ENCODE measurements at regions of chr20 and their contacts with region 1.

Region 1: GRCh38 chr20:50189681-50190582 is 698 bp upstream of the CEBPB start:
- DNase-seq: peak; percentile 95
- ATAC-seq: peak; percentile 74

Region 2: DNA sequence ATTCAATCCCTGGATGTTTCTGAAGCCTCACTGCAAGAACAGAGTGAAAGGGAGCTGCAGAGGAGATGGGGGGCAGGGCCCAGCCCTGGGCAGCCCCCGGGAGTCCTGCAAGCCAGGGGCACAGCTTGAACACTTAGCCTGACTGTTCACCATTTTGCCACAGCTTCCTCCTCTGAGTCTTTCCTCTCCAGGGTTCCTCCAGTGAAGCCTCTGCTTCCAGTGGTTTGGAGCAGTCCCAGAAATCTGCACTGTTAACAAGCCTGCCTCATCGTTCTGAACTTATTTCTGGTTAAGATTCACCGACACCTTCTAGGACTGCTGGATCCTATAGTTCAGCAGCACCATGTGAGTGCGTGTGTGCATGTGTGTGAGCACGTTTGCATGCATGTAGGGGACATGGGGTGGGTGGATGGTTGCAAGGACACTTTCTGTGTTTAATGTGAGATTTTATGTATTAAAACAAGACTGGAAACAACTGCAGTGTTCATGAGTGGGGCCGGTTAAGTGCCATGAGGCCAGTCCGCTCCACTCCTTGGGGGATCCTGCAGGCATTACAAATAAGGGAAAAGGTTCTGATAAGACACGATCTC is 25.3 kb after region 1 on chr20:
- intact Hi-C with region 1: no loop called
- DNase-seq: no peak
- ATAC-seq: peak; percentile 7

Region 3: DNA sequence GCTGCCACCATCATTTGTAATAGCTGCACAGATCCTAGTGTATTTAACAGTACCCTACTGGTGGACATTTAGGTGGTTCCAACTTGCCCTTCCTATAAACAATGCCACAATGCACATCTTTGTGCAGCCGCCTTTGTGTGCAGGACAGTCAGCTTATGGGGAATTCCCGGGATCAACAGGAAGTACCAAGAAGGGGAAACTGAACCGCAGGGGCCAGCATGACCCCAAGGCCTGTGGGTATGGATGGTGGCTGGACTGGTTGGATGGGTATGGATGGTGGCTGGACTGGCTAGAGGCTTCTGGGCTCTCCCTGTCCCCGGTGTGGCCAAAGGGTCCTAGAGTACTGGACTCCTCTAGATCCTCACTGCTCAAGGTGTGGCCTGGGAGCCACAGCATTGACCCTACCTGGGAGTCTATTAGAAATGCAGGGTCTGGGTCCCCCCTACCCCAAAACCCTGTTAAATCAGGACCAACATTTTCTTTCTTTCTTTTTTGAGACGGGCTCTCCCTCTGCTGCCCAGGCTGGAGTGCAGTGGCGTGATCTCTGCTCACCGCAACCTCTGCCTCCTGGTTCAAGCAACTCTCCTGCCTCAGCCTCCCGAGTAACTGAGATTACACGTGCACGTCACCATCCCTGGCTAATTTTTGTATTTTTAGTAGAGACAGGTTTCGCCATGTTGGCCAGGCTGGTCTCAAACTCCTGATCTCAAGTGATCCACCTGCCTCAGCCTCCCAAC is 47.6 kb after region 1 on chr20:
- intact Hi-C with region 1: no loop called
- DNase-seq: no peak
- ATAC-seq: no peak

Region 4: DNA sequence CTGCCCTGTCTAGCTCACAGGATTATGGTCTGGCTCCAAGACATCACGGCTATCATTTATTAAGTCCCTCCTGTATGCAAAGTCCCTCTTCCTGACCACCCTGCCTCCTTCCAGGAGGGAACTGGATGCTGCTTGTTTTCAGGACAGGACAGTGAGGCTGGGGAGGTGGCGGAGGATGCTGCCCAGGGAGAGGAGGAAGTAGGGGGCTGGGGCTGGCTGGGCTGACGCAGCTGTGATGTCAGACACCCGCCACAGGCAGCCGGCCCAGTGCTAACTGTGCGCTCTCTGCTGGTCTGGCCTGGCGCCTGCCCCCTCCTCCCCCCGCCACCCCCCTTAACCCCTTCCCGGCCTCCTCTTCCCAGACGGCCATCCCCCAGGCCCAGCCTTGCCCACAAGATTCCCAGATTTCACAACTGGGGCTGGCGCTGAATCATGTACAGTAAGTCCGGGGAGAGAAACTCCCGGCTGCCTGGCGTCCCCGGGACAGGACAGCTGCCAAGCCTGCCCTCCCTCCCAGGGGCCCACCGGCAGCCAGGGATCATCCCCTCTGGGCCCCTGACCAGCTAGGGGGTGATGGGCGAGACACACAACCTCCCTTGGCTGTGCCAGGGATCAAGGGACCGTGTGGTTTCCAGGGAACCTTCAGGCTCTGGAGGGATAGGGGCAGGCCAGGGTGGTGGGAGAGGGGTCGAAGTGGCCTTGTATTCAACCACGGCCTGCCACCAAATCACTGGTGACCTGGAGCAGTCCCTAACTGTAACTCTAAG is 118.8 kb after region 1 on chr20:
- intact Hi-C with region 1: loop called (anchors 5 kb)
- DNase-seq: peak; percentile 91
- ATAC-seq: peak; percentile 82

Region 5: GRCh38 chr20:50460460-50461267 is 270.7 kb after region 1 on chr20:
- intact Hi-C with region 1: loop called (anchors 2 kb)
- DNase-seq: peak; percentile 93
- ATAC-seq: peak; percentile 88

Region 6: GRCh38 chr20:50516180-50516934 is 326.4 kb after region 1 on chr20:
- intact Hi-C with region 1: no loop called
- DNase-seq: no peak
- ATAC-seq: no peak

Region 7: DNA sequence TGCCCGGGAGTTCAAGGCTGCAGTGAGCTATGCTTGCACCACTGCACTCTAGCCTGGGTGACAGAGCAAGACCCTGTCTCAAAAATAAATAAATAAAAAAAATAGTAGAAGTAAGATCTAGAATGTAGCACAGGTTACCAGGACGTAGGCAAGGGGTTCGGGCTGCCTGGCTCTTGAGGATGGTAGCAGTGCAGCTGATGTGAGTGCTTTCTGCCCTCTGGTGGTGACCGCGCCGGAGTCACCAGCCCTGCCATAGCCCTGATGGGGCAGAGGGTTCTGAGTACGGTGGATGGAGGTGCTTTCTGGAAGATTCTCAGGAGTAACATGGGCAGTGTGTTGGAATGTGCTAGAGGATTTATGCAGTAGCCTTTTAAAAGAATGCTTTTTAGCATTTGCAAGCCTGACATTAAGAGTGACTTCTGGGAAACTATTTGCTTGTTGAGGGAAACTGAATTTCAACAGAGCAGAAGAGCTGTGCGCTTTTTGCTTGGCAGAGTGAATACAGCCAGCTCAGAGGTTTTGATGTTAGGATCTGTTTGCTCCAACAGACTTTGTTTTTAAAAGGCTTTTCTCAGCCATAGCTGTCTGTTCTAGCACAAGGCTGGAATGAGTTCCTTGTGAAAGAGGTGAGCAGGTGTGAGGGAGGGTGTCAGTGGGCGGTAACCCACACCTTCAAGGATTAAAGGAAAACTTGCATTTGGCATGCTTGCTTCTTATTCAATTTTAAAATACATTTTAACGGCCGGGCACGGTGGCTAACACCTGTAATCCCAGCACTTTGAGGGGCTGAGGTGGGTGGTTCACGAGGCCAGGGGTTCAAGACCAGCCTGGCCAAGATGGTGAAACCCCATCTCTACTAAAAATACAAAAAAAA is 386.2 kb after region 1 on chr20:
- intact Hi-C with region 1: loop called (anchors 5 kb)
- DNase-seq: peak; percentile 81
- ATAC-seq: peak; percentile 74

Measured in sciatic nerve (tissue), 2 donors.